Ascending aorta (tissue), 2 donors: ENCODE measurements at regions of chr12 and their contacts with region 1.

Region 1: DNA sequence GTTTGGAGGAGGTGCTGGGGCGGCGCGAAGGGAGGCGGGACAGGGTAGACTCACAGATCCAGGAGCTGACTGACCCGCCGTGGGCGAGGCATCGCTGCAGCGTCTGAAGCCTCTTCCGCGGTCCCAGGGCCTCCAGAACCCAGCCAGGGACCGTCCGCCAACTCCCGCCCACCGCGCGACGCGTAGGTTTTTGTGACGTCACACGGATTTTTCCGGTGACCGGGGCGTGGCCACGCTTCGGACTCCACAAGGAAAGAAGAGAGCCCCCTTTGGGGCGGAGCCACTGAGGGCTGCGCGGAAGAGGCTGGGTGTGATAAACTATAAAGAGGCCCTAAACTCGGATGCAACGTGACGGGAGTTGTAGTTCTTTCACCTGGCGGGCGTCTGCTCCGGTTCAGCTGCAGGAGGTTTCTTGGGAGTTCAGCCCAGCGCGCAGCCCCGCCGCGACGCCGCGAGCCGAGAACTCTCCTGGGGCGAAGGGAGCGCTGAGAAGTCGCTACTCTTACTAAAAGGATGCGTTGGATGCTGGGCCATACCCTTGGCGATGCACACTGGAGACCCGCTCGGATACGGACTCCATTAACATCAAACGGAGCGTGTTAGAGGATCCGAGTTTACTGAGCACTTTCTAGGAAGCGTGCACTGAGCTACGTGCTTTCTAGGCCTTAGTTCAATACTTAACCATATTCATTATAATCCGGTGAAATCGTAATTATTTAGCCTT is at the start of gene AMN1:
- DNase-seq: peak; percentile 99 to 100
- H3K4me3 ChIP-seq: peak within 1 kb of the TSS; percentile 56 to 84
- H3K27ac ChIP-seq: peak within 1 kb of the TSS; percentile 92 to 96
- H3K4me1 ChIP-seq: peaks cover 10 to 37% of the 10 kb centered on the region in 2 donors
- H3K27me3 ChIP-seq: no peaks in the 10 kb centered on the region
- CTCF ChIP-seq: no peak
- total RNA-seq, gene AMN1: 0.75 TPM

Region 2: GRCh38 chr12:31325877-31326631 is 403.0 kb before region 1 on chr12 and contains the start of gene SINHCAF:
- intact Hi-C with region 1: loop called (anchors 2 kb)
- DNase-seq: peak; percentile 99 to 100
- H3K4me3 ChIP-seq: peak within 1 kb of the TSS; percentile 86 to 91
- H3K27ac ChIP-seq: peak within 1 kb of the TSS; percentile 81 to 84
- H3K4me1 ChIP-seq: no peaks in the 10 kb centered on the region
- H3K27me3 ChIP-seq: no peaks in the 10 kb centered on the region
- CTCF ChIP-seq: no peak
- total RNA-seq, gene SINHCAF: 10.9 TPM

Region 3: DNA sequence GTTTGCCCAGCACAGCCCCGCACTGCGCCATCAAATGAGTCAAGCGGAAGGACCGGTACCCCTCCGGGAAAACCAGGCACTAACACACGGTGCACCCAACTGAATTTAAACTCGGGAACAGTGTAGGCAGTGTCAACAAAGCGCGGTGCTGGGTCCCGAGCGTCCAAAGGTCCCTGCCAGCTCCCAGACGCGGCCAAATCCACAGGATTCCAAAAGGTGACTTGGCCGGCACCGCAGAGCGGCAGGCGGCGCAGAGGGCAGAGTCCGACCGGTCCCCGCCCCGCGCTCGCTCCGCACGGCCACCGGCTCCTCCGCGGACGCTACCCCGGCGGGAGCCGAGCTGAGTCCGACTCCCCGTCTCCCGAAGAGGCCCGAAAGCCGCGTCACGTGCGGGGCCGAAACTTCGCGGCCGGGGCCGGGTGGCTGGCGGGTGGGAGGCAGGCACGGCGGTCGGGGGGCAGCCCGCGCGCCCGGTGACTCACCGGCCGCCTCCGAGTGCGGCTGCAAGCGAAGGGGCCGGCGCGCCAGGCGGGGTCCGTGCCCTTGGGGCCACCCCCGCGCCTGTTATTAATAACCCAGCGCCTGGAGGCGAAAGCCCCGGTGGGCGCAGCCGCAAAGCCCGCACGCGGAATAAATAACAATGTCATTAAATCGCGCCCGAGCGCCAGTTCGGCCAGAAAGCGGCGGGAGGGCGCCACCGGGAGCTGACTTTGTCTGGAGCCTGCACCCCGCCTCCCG is 139.0 kb before region 1 on chr12:
- intact Hi-C with region 1: loop called (anchors 2 kb)
- DNase-seq: peak; percentile 42 to 91
- H3K4me3 ChIP-seq: peak overlapping the region; percentile 78 to 95
- H3K27ac ChIP-seq: peak overlapping the region; percentile 95 to 96
- H3K4me1 ChIP-seq: peaks cover 0 to 11% of the 10 kb centered on the region in 2 donors
- H3K27me3 ChIP-seq: no peaks in the 10 kb centered on the region
- CTCF ChIP-seq: no peak

Region 4: GRCh38 chr12:31629756-31630732 is 99.0 kb before region 1 on chr12:
- intact Hi-C with region 1: no loop called
- DNase-seq: no peak
- H3K4me3 ChIP-seq: no peak overlapping the region
- H3K27ac ChIP-seq: no peak overlapping the region
- H3K4me1 ChIP-seq: peaks cover 0 to 6% of the 10 kb centered on the region in 2 donors
- H3K27me3 ChIP-seq: no peaks in the 10 kb centered on the region
- CTCF ChIP-seq: no peak

Region 5: GRCh38 chr12:31659087-31659933 is 69.8 kb before region 1 on chr12 and contains the start of gene ETFBKMT:
- intact Hi-C with region 1: loop called (anchors 1 kb)
- DNase-seq: peak; percentile 67 to 94
- H3K4me3 ChIP-seq: peak within 1 kb of the TSS; percentile 68 to 82
- H3K27ac ChIP-seq: peak within 1 kb of the TSS; percentile 87 to 95
- H3K4me1 ChIP-seq: peaks cover 0 to 3% of the 10 kb centered on the region in 2 donors
- H3K27me3 ChIP-seq: no peaks in the 10 kb centered on the region
- CTCF ChIP-seq: peak in 2 of 3 experiments; percentile 27 to 50
- total RNA-seq, gene ETFBKMT: 0.64 TPM

Region 6: GRCh38 chr12:31749024-31749704 is 20.1 kb after region 1 on chr12:
- intact Hi-C with region 1: loop called (anchors 2 kb)
- DNase-seq: peak in 1 of 2 donors; percentile 83
- H3K4me3 ChIP-seq: no peak overlapping the region
- H3K27ac ChIP-seq: no peak overlapping the region
- H3K4me1 ChIP-seq: peaks cover 0 to 8% of the 10 kb centered on the region in 2 donors
- H3K27me3 ChIP-seq: no peaks in the 10 kb centered on the region
- CTCF ChIP-seq: no peak

Region 7: DNA sequence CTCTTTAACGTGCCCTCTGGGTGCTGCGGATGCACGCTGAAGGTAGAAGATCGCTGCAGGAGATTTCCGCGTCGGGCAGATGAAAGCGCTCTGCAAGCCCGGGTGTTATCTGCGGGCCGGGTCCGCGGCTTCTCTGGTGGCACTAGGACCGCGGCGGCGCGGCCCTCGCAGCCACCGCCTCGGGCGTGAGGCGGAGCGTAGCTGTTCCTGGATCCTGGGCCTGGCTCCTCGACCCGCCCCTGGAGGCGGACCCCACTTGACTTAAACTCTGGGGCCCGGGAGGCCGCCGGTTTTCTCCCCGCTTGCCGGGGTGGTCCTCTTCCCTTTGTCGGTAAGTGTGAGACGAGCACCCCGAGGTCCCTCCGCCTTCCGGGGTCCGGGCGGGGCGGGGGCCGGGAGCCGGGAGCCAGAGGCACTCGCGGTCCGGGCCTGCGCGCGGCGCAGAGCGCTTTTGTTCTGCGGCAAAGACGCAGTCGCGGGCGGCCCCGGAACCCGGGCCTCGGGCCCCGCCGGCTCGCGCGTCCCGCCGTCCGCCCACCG is 230.2 kb after region 1 on chr12 and contains the start of gene RESF1:
- intact Hi-C with region 1: loop called (anchors 1 kb)
- DNase-seq: peak; percentile 64 to 93
- H3K4me3 ChIP-seq: peak within 1 kb of the TSS; percentile 82 to 85
- H3K27ac ChIP-seq: peak within 1 kb of the TSS; percentile 82 to 96
- H3K4me1 ChIP-seq: peaks cover 3 to 17% of the 10 kb centered on the region in 2 donors
- H3K27me3 ChIP-seq: no peaks in the 10 kb centered on the region
- CTCF ChIP-seq: no peak
- total RNA-seq, gene RESF1: 26.0 TPM

Region 8: GRCh38 chr12:32679091-32679919 is 950.2 kb after region 1 on chr12 and contains the start of gene DNM1L:
- intact Hi-C with region 1: loop called (anchors 2 kb)
- DNase-seq: peak; percentile 81 to 97
- H3K4me3 ChIP-seq: peak within 1 kb of the TSS; percentile 82 to 84
- H3K27ac ChIP-seq: peak within 1 kb of the TSS; percentile 93 to 94
- H3K4me1 ChIP-seq: peaks cover 0 to 5% of the 10 kb centered on the region in 2 donors
- H3K27me3 ChIP-seq: no peaks in the 10 kb centered on the region
- CTCF ChIP-seq: no peak
- total RNA-seq, gene DNM1L: 50.9 TPM